Psoas muscle (tissue), 8 donors: ENCODE measurements at regions of chr3 and their contacts with region 1.

Region 1: GRCh38 chr3:142279965-142280590 is 54.7 kb upstream of the GK5 start:
- DNase-seq: no peak
- ATAC-seq: peak; percentile 63 to 89 (median 82)
- H3K4me3 ChIP-seq: no peak overlapping the region
- H3K27ac ChIP-seq: no peak overlapping the region
- H3K4me1 ChIP-seq: no peaks in the 10 kb centered on the region
- H3K27me3 ChIP-seq: no peaks in the 10 kb centered on the region
- CTCF ChIP-seq: peak; percentile 59

Region 2: DNA sequence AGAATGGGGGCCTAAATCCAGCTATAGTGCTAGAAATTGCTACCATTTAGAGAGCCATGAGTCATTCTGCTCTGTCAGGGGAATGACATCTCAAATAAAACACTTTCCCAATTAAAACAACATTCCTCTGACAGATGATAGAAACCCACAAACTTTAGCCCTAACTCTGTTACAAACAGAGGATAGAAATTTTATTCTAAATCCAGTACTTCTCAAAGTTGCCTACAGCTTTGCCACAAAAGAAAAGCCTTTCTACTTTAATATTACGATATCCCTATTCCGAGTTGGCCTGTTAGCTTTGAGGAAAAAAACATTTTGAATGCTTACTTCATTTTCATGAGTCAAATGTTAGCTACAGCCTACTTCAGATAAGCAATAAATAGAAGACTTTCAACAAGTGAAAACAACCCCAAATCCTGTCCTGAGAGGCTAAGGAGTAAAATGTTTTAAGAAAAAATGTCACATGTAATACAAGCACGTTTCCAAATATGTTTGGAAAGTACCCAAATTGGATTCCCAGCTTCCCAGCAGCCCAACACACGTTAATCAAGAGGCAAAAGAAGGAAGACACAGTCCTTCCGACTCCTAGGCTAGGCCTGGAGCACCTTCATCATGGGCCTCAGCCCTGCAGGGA is 320.0 kb before region 1 on chr3:
- intact Hi-C with region 1: loop called (anchors 2 to 5 kb)
- DNase-seq: no peak
- ATAC-seq: peak in 1 of 4 donors; percentile 21
- H3K4me3 ChIP-seq: no peak overlapping the region
- H3K27ac ChIP-seq: peak overlapping the region; percentile 31
- H3K4me1 ChIP-seq: no peaks in the 10 kb centered on the region
- H3K27me3 ChIP-seq: no peaks in the 10 kb centered on the region
- CTCF ChIP-seq: no peak

Region 3: DNA sequence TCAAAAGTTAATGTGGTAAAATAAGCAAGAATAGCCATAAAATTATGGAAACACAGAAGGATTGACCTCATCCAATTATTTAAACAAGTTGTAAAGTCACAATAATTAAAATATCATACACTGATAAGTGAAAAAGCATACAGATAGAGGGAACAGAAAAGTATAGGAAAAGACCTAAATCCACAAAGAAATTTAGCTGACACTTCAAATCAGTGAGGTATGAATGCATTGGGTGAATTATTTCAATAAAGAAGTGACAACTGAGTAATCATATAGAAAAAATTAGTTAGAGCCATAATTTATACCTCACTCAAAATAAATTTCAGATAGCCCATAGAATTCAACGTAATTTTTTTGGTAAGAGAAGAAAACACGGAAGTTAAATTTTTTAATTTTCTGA is 155.8 kb before region 1 on chr3:
- intact Hi-C with region 1: loop called in 1 of 2 experiments (anchors 2 kb)
- DNase-seq: no peak
- ATAC-seq: no peak
- H3K4me3 ChIP-seq: no peak overlapping the region
- H3K27ac ChIP-seq: no peak overlapping the region
- H3K4me1 ChIP-seq: peaks cover 5% of the 10 kb centered on the region
- H3K27me3 ChIP-seq: no peaks in the 10 kb centered on the region
- CTCF ChIP-seq: no peak

Region 4: DNA sequence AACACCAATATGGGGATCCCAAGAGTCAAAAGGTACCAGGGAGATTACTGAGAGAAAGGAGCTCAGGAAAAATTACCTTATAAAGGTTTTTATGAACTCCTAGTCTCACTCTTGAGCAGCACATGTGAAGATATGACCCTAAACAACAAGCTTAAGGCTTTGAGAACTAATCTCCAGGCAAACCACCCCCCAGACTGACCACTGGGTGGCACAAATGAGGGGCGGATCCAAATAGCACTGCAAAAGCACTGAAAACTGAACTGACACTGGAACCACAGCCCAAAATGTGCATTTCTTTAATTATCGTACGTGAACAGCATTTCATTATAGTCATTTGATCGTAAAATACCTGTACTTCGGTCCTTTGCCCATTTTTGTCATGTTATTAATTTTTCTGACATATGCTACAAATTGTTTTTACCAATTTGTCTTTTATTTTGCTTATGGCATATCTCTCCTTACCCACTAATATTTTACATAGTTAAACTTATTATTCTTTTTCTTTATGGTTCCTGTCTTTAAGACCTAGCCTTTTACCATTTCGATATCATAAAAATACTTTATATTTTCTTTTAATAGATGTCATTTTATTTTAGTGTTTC is 99.2 kb before region 1 on chr3:
- intact Hi-C with region 1: loop called in 1 of 2 experiments (anchors 5 kb)
- DNase-seq: peak in 1 of 2 donors; percentile 16
- ATAC-seq: no peak
- H3K4me3 ChIP-seq: no peak overlapping the region
- H3K27ac ChIP-seq: no peak overlapping the region
- H3K4me1 ChIP-seq: no peaks in the 10 kb centered on the region
- H3K27me3 ChIP-seq: no peaks in the 10 kb centered on the region
- CTCF ChIP-seq: peak; percentile 24

Region 5: GRCh38 chr3:142226484-142226883 is 53.6 kb before region 1 on chr3:
- intact Hi-C with region 1: no loop called
- DNase-seq: no peak
- ATAC-seq: no peak
- H3K4me3 ChIP-seq: no peak overlapping the region
- H3K27ac ChIP-seq: no peak overlapping the region
- H3K4me1 ChIP-seq: peaks cover 14% of the 10 kb centered on the region
- H3K27me3 ChIP-seq: no peaks in the 10 kb centered on the region
- CTCF ChIP-seq: no peak

Region 6: GRCh38 chr3:142239421-142239820 is 40.7 kb before region 1 on chr3:
- intact Hi-C with region 1: no loop called
- DNase-seq: no peak
- ATAC-seq: no peak
- H3K4me3 ChIP-seq: no peak overlapping the region
- H3K27ac ChIP-seq: no peak overlapping the region
- H3K4me1 ChIP-seq: no peaks in the 10 kb centered on the region
- H3K27me3 ChIP-seq: no peaks in the 10 kb centered on the region
- CTCF ChIP-seq: no peak

Region 7: DNA sequence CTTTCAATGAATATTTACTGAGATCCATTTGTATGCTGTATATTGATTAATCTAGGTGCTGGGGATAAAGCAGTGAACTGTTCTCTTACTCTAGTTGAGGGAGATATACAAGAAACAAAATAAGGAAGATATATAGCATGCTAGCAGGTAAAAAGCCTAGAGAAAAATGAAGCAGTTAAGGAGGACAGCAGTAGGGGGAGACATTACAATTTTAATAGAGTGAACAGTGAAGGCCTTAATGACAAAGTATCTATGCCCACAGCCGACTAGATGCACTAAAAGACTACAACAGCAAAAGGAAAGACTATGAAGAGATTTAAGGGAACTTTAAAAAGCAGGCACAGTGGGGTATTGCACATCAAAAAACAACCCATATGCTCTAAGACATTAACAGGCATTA is 86.4 kb after region 1 on chr3:
- intact Hi-C with region 1: no loop called
- DNase-seq: no peak
- ATAC-seq: no peak
- H3K4me3 ChIP-seq: no peak overlapping the region
- H3K27ac ChIP-seq: no peak overlapping the region
- H3K4me1 ChIP-seq: no peaks in the 10 kb centered on the region
- H3K27me3 ChIP-seq: no peaks in the 10 kb centered on the region
- CTCF ChIP-seq: no peak